B cell (primary cell): ENCODE measurements at regions of chr5 and their contacts with region 1.

Region 1: GRCh38 chr5:159504857-159505304 is 174.6 kb upstream of the IL12B start:
- DNase-seq: no peak
- ATAC-seq: no peak
- H3K4me3 ChIP-seq: no peak overlapping the region
- H3K4me3 Mint-ChIP-seq: no peak overlapping the region
- H3K27ac ChIP-seq: no peak overlapping the region
- H3K27ac Mint-ChIP-seq: no peak overlapping the region
- H3K4me1 ChIP-seq: no peaks in the 10 kb centered on the region
- H3K4me1 Mint-ChIP-seq: no peaks in the 10 kb centered on the region
- H3K27me3 ChIP-seq: no peaks in the 10 kb centered on the region
- H3K27me3 Mint-ChIP-seq: no peaks in the 10 kb centered on the region
- CTCF ChIP-seq: no peak

Region 2: GRCh38 chr5:159515909-159516415 is 11.1 kb after region 1 on chr5:
- CTCF ChIA-PET with region 1: interaction called, 21 read pairs
- POLR2A ChIA-PET with region 1: no interaction called
- intact Hi-C with region 1: no loop called
- DNase-seq: peak; percentile 62
- ATAC-seq: peak; percentile 85
- H3K4me3 ChIP-seq: no peak overlapping the region
- H3K4me3 Mint-ChIP-seq: no peak overlapping the region
- H3K27ac ChIP-seq: no peak overlapping the region
- H3K27ac Mint-ChIP-seq: no peak overlapping the region
- H3K4me1 ChIP-seq: peaks cover 3 to 6% of the 10 kb centered on the region in 2 donors
- H3K4me1 Mint-ChIP-seq: peaks cover 6% of the 10 kb centered on the region
- H3K27me3 ChIP-seq: peaks cover 0 to 3% (median 0%) of the 10 kb centered on the region in 4 experiments
- H3K27me3 Mint-ChIP-seq: no peaks in the 10 kb centered on the region
- CTCF ChIP-seq: peak; percentile 75